PC-9 (cell line): ENCODE measurements at regions of chr12 and their contacts with region 1.

Region 1: GRCh38 chr12:83796527-83796926 is 1109.8 kb downstream of the TMTC2 start:
- DNase-seq: no peak
- H3K4me3 ChIP-seq: no peak overlapping the region
- H3K27ac ChIP-seq: no peak overlapping the region
- H3K4me1 ChIP-seq: no peaks in the 10 kb centered on the region
- H3K27me3 ChIP-seq: no peaks in the 10 kb centered on the region
- CTCF ChIP-seq: no peak

Region 2: DNA sequence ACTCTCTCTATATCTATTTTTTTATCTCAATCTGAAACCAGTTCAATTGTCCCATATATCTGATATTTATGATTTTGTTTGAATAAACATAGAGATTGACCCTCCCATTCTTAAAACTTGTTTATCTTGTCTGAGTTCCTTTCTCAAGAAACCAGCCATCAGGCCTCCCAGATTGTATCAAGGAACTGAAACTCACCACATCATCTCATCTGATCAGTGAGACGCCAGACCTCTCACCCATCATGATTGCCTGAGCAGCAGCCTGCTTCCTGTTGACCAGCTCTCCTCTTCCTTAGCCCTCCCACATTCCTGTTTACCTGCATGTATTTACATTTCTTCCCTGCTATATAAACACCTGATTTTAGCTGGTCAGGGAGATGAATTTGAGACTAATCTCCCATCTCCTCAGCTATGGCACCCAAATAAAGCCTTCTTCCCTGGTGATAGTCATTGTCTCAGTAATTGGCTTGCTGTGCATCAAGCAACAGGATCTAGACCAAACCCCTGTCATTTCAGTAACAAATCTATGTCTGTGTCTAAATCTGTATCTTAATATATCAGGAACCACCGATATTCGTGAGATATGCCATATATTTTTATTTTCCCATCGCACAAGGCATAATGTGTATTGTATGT is 786.2 kb before region 1 on chr12:
- CTCF ChIA-PET with region 1: no interaction called
- POLR2A ChIA-PET with region 1: no interaction called
- intact Hi-C with region 1: no loop called
- DNase-seq: peak in 1 of 2 experiments; percentile 35
- H3K4me3 ChIP-seq: no peak overlapping the region
- H3K27ac ChIP-seq: no peak overlapping the region
- H3K4me1 ChIP-seq: peaks cover 2% of the 10 kb centered on the region; the same call in 1 of the 2 replicates
- H3K27me3 ChIP-seq: no peaks in the 10 kb centered on the region
- CTCF ChIP-seq: no peak

Region 3: DNA sequence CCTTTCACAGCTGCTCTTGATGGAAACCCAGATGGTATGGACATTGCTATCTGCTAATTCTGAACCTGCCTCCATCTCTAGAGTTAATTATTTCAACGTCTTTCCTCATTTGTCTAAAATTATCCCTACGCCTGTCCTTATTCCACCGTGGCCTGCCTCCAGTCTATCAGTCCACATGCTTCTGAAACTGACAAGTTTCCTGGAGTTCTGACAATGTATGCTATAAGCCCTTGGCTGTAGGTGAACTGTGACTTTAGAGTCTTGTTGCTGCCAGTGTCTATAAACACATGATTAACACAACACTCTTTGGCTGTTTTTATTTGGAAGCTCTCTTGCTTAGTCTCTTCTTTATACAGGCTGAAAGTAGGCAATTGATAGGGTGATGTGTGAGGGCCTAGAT is 56.9 kb before region 1 on chr12:
- CTCF ChIA-PET with region 1: no interaction called
- POLR2A ChIA-PET with region 1: interaction called, 12 read pairs
- intact Hi-C with region 1: no loop called
- DNase-seq: no peak
- H3K4me3 ChIP-seq: no peak overlapping the region
- H3K27ac ChIP-seq: no peak overlapping the region
- H3K4me1 ChIP-seq: no peaks in the 10 kb centered on the region
- H3K27me3 ChIP-seq: no peaks in the 10 kb centered on the region
- CTCF ChIP-seq: no peak

Region 4: DNA sequence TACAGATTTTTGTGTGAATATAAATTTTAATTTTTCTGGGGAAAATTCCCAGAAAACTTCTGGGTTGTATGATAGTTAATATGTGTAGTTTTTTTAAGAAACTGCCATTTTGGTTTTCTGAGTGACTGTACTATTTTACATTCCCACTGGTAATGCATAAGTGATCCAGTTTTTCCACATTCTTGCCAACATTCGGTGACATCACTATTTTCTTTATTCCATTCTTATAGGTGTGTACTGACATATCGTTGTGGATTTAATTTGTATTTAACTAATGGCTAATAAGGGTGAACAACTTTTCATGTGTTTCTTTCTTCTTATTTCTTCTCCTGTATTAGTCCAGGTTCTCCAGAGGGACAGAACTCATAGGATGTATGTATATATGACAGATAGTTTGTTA is 653.9 kb after region 1 on chr12:
- CTCF ChIA-PET with region 1: interaction called, 10 read pairs
- POLR2A ChIA-PET with region 1: no interaction called
- intact Hi-C with region 1: no loop called
- DNase-seq: no peak
- H3K4me3 ChIP-seq: no peak overlapping the region
- H3K27ac ChIP-seq: no peak overlapping the region
- H3K4me1 ChIP-seq: no peaks in the 10 kb centered on the region
- H3K27me3 ChIP-seq: no peaks in the 10 kb centered on the region
- CTCF ChIP-seq: no peak